ENCODE measurements at regions of chr12 and their contacts with region 1.

Region 1: GRCh38 chr12:93397412-93397811 is 19.7 kb downstream of the NUDT4 start:
- DNase-seq: no peak
- ATAC-seq: no peak
- H3K4me3 ChIP-seq: no peak overlapping the region
- H3K27ac ChIP-seq: no peak overlapping the region
- H3K4me1 ChIP-seq: no peaks in the 10 kb centered on the region; a peak in 2 of 5 replicates
- H3K27me3 ChIP-seq: no peaks in the 10 kb centered on the region
- CTCF ChIP-seq: no peak
- EP300 ChIP-seq: no peak
- POLR2A ChIP-seq: no peak
- RAD21 ChIP-seq: no peak

Region 2: GRCh38 chr12:92987362-92987761 is 410.1 kb before region 1 on chr12:
- CTCF ChIA-PET with region 1: interaction called, 23 read pairs
- POLR2A ChIA-PET with region 1: interaction called, 4 read pairs
- in situ Hi-C with region 1: loop called (anchors 25 kb)
- intact Hi-C with region 1: no loop called
- DNase-seq: peak; percentile 48 to 76 (median 56)
- ATAC-seq: peak; percentile 91
- H3K4me3 ChIP-seq: no peak overlapping the region
- H3K27ac ChIP-seq: no peak overlapping the region
- H3K4me1 ChIP-seq: peaks cover 0 to 12% of the 10 kb centered on the region in 2 experiments; a peak in 1 of 5 replicates
- H3K27me3 ChIP-seq: no peaks in the 10 kb centered on the region
- CTCF ChIP-seq: peak; percentile 42 to 80 (median 47); a peak in 4 of 6 replicates
- EP300 ChIP-seq: no peak
- POLR2A ChIP-seq: no peak
- RAD21 ChIP-seq: peak; percentile 85 to 88

Region 3: DNA sequence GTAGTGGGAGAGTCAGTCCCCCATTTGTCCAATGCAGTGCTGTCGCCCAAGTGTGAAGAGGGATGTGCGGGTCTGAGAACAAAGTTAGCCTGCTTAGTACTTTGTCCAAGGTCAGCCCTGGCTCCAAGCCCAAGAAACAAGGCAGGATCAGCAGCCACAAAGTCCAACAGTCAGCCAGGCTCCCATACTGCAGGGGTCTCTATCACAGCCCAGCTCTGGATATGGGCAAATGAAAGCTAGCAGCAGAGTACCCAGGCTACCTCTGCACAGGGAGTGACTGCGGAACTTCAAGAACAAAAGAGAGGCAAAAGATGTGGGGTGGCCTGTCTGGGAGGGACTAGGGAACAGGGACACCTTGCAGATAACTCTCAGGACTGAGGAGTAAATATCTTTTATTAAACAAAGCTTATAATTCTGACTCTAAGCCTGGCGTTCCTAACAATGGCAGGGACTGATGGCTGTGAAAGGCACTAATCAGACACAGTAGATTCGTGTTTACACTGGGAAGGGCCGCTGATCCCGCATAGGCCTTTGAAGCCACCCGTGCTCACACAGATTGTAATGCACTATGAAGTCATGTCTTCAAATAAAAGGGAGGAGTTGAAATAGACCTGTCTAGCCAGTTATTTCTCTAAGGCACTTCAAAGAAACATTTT is 377.3 kb before region 1 on chr12:
- CTCF ChIA-PET with region 1: interaction called, 8 read pairs
- POLR2A ChIA-PET with region 1: no interaction called
- in situ Hi-C with region 1: no loop called
- intact Hi-C with region 1: loop called (anchors 2 kb)
- DNase-seq: peak in 3 of 4 experiments; percentile 22 to 60 (median 44)
- ATAC-seq: peak; percentile 80
- H3K4me3 ChIP-seq: no peak overlapping the region
- H3K27ac ChIP-seq: peak overlapping the region; percentile 63
- H3K4me1 ChIP-seq: peaks cover 8 to 39% of the 10 kb centered on the region in 2 experiments; a peak in 3 of 5 replicates
- H3K27me3 ChIP-seq: no peaks in the 10 kb centered on the region
- CTCF ChIP-seq: no peak
- EP300 ChIP-seq: no peak
- POLR2A ChIP-seq: no peak
- RAD21 ChIP-seq: no peak

Region 4: DNA sequence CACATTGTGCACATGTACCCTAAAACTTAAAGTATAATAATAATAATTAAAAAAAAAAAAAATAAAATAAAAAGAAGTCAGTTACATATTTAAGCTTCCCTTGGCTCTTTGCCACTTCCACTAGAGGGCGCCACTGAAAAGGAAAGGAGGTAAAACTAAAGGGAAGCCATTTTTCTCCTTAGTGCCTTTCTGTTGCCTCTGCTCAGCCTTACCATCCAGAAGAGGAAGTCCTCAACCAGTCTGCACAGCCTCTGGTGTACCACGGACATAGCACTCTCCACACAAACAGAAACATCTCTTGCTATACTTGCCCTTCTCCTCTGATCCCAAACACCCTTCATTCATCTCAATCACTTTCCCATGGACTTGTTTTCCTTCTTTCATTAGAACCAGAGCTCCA is 299.3 kb before region 1 on chr12:
- CTCF ChIA-PET with region 1: no interaction called
- POLR2A ChIA-PET with region 1: no interaction called
- in situ Hi-C with region 1: no loop called
- intact Hi-C with region 1: loop called (anchors 5 kb)
- DNase-seq: peak; percentile 37 to 81 (median 52)
- ATAC-seq: peak; percentile 87
- H3K4me3 ChIP-seq: no peak overlapping the region
- H3K27ac ChIP-seq: no peak overlapping the region
- H3K4me1 ChIP-seq: peaks cover 0 to 9% of the 10 kb centered on the region in 2 experiments; a peak in 2 of 5 replicates
- H3K27me3 ChIP-seq: no peaks in the 10 kb centered on the region
- CTCF ChIP-seq: peak; percentile 57 to 71 (median 57); a peak in 5 of 6 replicates
- EP300 ChIP-seq: no peak
- POLR2A ChIP-seq: no peak
- RAD21 ChIP-seq: peak; percentile 29 to 73; a peak in 3 of 4 replicates

Region 5: GRCh38 chr12:93243689-93244513 is 153.5 kb before region 1 on chr12:
- CTCF ChIA-PET with region 1: no interaction called
- POLR2A ChIA-PET with region 1: interaction called, 3 read pairs
- in situ Hi-C with region 1: no loop called
- intact Hi-C with region 1: loop called (anchors 5 kb)
- DNase-seq: peak in 2 of 4 experiments; percentile 34 to 60
- ATAC-seq: peak; percentile 79
- H3K4me3 ChIP-seq: no peak overlapping the region
- H3K27ac ChIP-seq: 0 out of 3 replicates have a peak overlapping the region, but pooled peaks have one; percentile 15
- H3K4me1 ChIP-seq: peaks cover 5 to 35% of the 10 kb centered on the region in 2 experiments; a peak in 3 of 5 replicates
- H3K27me3 ChIP-seq: no peaks in the 10 kb centered on the region
- CTCF ChIP-seq: no peak
- EP300 ChIP-seq: peak; percentile 57; the same call in 1 of the 2 replicates
- POLR2A ChIP-seq: no peak
- RAD21 ChIP-seq: no peak

Region 6: GRCh38 chr12:93379981-93380361 is 17.4 kb before region 1 on chr12:
- CTCF ChIA-PET with region 1: no interaction called
- POLR2A ChIA-PET with region 1: no interaction called
- in situ Hi-C with region 1: no loop called
- intact Hi-C with region 1: no loop called
- DNase-seq: no peak
- ATAC-seq: no peak
- H3K4me3 ChIP-seq: peak overlapping the region; percentile 97
- H3K27ac ChIP-seq: peak overlapping the region; percentile 88
- H3K4me1 ChIP-seq: peaks cover 11 to 18% of the 10 kb centered on the region in 2 experiments; a peak in 4 of 5 replicates
- H3K27me3 ChIP-seq: no peaks in the 10 kb centered on the region
- CTCF ChIP-seq: no peak; a peak in 1 of 6 replicates
- EP300 ChIP-seq: no peak
- POLR2A ChIP-seq: no peak
- RAD21 ChIP-seq: no peak

Region 7: DNA sequence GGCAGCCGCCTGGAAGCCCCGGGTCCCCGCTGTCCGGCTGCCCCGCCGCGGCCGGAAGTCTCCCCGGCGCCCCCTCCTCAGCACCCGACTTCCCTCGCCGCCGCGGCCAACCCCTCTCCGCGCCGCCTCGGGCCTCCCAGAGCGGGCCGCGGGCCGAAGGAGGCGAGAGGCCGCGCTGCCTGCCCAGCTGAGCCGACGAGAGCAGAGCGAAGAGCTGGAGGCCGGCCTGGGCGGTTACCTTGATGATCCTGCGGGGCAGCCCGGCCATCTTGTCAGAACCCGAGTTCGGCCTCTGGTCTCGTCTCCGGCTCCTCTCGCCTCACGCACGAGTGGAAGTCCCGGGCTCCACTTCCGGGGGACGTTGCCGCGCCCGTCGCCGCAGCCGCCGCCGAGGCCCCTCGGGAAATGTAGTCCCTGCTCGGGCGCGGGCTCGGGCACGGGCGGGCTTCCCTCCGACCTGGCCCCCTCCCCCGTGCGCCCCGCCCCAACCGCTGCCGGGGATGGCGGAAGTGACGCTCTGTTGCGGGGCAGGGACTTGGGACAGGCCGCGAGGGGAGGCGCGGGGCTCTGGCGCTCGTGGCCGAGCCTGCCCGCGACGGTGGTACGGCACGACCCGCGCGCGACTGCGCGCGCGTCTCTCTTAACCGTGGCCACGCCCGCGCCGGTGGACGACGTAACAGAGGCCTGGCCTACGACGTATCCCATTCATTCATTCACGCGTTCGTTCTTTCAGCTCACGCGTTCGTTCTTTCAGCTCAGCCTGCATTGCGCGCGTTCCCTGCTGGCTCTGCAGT is 44.4 kb after region 1 on chr12 and contains the start of gene UBE2N:
- CTCF ChIA-PET with region 1: no interaction called
- POLR2A ChIA-PET with region 1: no interaction called
- in situ Hi-C with region 1: no loop called
- intact Hi-C with region 1: no loop called
- DNase-seq: peak; percentile 93 to 97 (median 94)
- ATAC-seq: peak; percentile 88
- H3K4me3 ChIP-seq: peak within 1 kb of the TSS; percentile 89
- H3K27ac ChIP-seq: peak within 1 kb of the TSS; percentile 93
- H3K4me1 ChIP-seq: peaks cover 14 to 30% of the 10 kb centered on the region in 2 experiments
- H3K27me3 ChIP-seq: no peaks in the 10 kb centered on the region
- CTCF ChIP-seq: 0 out of 6 replicates have a peak, but pooled peaks of 1 of the 3 experiments have one; percentile 11
- EP300 ChIP-seq: peak; percentile 31
- POLR2A ChIP-seq: peak; percentile 93
- RAD21 ChIP-seq: 0 out of 4 replicates have a peak, but pooled peaks of 1 of the 2 experiments have one; percentile 11
- polyA plus RNA-seq, gene UBE2N: 727 to 826 TPM

Region 8: GRCh38 chr12:93494096-93494495 is 96.7 kb after region 1 on chr12:
- CTCF ChIA-PET with region 1: no interaction called
- POLR2A ChIA-PET with region 1: no interaction called
- in situ Hi-C with region 1: no loop called
- intact Hi-C with region 1: no loop called
- DNase-seq: no peak
- ATAC-seq: no peak
- H3K4me3 ChIP-seq: no peak overlapping the region
- H3K27ac ChIP-seq: no peak overlapping the region
- H3K4me1 ChIP-seq: no peaks in the 10 kb centered on the region
- H3K27me3 ChIP-seq: no peaks in the 10 kb centered on the region
- CTCF ChIP-seq: no peak
- EP300 ChIP-seq: no peak
- POLR2A ChIP-seq: no peak
- RAD21 ChIP-seq: no peak

Region 9: DNA sequence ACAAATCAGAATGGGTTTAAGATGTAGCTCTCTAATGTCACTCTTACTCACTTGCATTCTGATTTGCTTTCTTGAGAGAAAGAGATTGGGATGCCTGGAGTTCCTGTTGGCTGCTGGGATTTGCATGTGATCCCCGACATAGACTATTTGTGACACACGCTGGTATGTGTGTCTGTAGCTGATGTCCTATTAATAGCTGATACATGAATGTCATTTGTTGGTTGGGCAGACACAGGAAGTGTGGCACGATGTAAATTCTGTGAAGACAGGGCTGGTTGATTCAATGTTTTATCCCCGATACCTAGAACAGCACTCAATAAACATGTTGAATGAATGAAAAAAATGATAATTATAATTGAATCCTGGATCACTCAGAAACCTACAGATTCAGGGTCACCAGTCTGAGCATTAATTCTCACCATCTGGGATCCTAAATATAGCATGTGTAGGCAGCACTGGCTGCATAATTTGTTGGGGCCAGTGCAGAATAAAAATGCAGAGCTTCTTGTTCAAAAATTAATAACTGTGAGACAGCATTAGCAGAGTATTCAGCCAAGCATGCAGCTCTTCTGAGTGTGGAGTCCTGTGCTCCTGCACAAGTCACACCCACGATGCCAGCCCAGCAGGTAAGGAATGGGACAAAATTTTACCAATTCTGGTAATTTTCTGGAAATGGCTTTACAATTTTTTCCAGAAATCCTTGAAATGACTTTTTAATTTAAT is 139.5 kb after region 1 on chr12:
- CTCF ChIA-PET with region 1: no interaction called
- POLR2A ChIA-PET with region 1: no interaction called
- in situ Hi-C with region 1: no loop called
- intact Hi-C with region 1: no loop called
- DNase-seq: no peak
- ATAC-seq: no peak
- H3K4me3 ChIP-seq: no peak overlapping the region
- H3K27ac ChIP-seq: no peak overlapping the region
- H3K4me1 ChIP-seq: no peaks in the 10 kb centered on the region; a peak in 2 of 5 replicates
- H3K27me3 ChIP-seq: no peaks in the 10 kb centered on the region
- CTCF ChIP-seq: no peak
- EP300 ChIP-seq: no peak
- POLR2A ChIP-seq: no peak
- RAD21 ChIP-seq: no peak